ENCODE measurements at regions of chr17 and their contacts with region 1.

Region 1: DNA sequence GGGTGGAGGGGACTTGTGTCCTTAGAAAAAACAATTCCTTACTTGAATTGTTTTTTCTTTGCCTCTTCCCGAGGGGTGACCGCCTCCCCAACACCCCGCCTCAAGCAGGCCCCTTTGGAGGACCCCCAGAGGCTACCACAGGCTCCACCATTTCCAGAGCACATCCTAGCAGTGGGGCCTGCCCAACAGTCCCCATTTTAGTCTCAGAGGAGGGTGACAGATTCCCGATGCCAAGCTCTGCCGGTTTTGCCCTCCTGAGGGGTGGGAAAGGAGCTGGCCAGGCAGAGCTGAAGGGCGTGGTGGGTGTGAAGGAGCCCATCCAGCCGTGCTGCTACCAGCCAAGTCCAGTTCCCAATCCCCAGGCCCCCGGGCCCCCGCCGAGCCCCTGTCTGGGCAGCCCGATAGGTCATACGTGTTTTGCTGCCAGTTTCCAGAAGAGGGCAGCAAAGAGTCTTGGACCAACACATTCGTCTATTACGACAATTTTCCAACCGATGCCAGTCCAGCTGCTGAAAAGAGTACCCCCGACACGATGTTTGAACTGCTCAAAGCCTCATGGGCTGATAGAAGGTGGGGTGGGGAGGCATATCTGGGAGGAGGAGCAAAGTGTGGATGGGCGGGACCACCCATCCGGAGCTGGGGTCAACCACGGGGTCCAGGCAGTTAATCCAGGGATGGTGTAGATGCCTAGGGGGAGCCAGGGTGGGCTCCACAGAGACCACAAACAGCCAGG is 18.8 kb upstream of the GAA start:
- H3K4me3 ChIP-seq: no peak overlapping the region
- H3K27ac ChIP-seq: no peak overlapping the region
- H3K4me1 ChIP-seq: no peaks in the 10 kb centered on the region
- CTCF ChIP-seq: peak; percentile 52; the same call in 1 of the 2 replicates

Region 2: DNA sequence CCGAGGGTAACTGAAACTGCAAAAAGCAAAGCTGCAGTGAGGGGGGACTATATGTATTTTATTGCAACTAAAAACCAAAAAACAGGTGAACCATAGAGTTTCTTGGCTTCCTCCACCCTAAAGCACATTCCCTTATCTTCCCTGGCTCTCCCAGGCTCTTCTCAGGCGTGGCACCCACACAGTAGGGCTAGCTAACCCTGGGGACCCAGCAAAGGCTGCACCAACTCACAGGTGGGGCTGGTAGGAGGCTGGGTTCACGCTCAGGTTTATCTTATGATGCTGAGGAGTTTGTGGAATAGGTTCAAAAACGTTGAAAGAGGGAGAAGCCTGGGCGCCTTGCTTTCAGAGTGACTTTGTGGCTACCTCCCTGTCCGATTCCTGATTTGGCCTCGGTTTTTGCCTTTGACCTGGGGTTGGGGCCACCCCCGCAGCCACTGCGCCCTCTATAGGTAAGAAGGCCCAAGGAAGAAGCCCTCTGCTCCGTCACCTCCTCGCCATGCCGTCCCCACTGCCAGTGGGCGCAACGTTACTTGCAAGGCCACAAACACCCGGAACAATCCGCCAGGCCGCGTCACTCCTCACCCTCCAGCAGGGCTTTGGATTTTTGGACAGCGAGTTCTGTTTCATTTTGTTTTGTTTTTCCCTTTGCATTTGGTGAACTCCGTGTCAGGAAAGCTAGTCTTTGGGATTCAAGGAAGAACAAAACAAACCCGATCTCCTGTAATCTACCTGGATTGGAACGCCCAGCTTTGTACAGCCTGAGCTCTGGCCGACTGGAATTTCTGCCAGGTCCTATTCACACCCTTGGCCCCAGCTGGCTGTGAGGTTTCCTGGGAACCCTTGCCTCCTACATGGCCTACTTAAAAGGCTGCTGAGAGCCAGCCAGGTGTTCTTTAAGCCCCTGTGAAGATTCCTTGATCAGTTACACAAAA is 107.7 kb before region 1 on chr17:
- CTCF ChIA-PET with region 1: no interaction called
- POLR2A ChIA-PET with region 1: no interaction called
- H3K4me3 ChIP-seq: no peak overlapping the region
- H3K27ac ChIP-seq: no peak overlapping the region; the same call in 1 of the 2 replicates
- H3K4me1 ChIP-seq: no peaks in the 10 kb centered on the region
- CTCF ChIP-seq: no peak

Region 3: DNA sequence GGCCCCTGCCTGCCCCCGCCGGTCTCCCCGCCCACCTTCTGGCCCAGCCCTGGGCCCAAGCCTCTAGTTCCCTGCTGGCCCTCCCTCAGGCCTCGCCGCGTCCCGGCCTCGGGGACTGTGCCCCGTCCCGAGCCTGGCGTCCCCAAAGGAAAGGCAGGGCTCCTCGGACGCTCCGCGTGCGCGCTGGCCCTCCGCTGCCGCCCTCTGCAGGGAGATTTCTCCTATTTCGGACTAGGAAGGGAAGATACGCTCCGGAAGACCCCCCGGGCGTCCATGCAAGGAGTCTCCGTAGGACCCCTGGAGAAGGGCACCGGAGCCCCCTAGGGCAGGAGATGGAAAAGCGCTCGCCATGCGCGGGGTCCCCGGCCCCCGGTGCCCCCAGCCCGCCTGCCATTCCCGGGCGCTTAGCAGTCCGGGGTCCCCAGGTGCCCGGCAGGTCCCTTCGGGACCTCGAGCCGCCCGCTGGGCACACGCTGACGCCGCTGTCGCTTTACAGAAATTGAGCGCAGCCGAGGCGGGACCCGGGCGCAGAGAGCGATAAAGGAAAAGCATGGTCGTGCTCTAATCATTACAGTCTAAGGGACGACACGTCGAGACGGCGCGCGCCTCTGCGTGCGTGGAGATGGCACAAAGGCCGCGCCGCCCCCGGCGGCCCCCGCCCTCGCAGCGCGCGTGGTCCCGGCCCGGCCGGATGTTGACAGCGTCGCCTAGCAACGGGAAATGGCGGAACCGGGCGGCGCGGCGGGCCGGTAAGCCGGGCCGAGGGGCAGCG is 46.4 kb before region 1 on chr17 and contains the start of gene CCDC40:
- CTCF ChIA-PET with region 1: interaction called, 12 read pairs
- POLR2A ChIA-PET with region 1: no interaction called
- H3K4me3 ChIP-seq: peak within 1 kb of the TSS; percentile 70
- H3K27ac ChIP-seq: peak within 1 kb of the TSS; percentile 72; the same call in 1 of the 2 replicates
- H3K4me1 ChIP-seq: no peaks in the 10 kb centered on the region
- CTCF ChIP-seq: peak; percentile 45; the same call in 1 of the 2 replicates

Region 4: GRCh38 chr17:80058311-80058955 is 24.1 kb before region 1 on chr17:
- CTCF ChIA-PET with region 1: interaction called, 10 read pairs
- POLR2A ChIA-PET with region 1: no interaction called
- H3K4me3 ChIP-seq: no peak overlapping the region
- H3K27ac ChIP-seq: no peak overlapping the region
- H3K4me1 ChIP-seq: 0 out of 2 replicates have a peak, but pooled peaks cover 2% of the 10 kb centered on the region
- CTCF ChIP-seq: no peak

Region 5: GRCh38 chr17:80072410-80072809 is 10.2 kb before region 1 on chr17:
- CTCF ChIA-PET with region 1: no interaction called
- POLR2A ChIA-PET with region 1: no interaction called
- H3K4me3 ChIP-seq: no peak overlapping the region
- H3K27ac ChIP-seq: no peak overlapping the region
- H3K4me1 ChIP-seq: no peaks in the 10 kb centered on the region; the same call in 1 of the 2 replicates
- CTCF ChIP-seq: no peak

Region 6: GRCh38 chr17:80092959-80093358 is 10.4 kb after region 1 on chr17:
- CTCF ChIA-PET with region 1: interaction called, 24 read pairs
- POLR2A ChIA-PET with region 1: no interaction called
- H3K4me3 ChIP-seq: no peak overlapping the region
- H3K27ac ChIP-seq: no peak overlapping the region
- H3K4me1 ChIP-seq: 0 out of 2 replicates have a peak, but pooled peaks cover 2% of the 10 kb centered on the region
- CTCF ChIP-seq: no peak

Region 7: GRCh38 chr17:80212109-80212508 is 129.5 kb after region 1 on chr17:
- CTCF ChIA-PET with region 1: no interaction called
- POLR2A ChIA-PET with region 1: no interaction called
- H3K4me3 ChIP-seq: no peak overlapping the region
- H3K27ac ChIP-seq: no peak overlapping the region
- H3K4me1 ChIP-seq: no peaks in the 10 kb centered on the region
- CTCF ChIP-seq: no peak

Region 8: DNA sequence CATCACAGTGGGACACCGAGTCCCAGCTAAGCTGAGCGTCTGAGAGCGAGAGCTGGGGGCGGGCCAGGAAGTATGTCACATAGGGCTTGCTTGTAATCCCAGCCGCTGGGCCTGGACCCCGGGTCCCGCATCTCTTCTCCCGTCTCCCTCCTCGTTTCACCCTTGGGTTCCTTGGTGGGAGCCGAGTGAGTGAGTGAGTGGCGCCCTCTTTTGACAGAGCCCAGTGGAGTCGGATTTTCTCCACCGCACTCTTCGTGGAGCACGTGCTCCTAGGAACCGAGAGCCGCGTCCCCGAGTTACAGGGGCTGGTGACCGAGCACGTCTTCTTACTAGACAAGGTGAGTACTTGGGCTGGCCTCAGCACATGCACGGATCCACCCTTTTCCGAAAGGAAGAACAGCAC is 281.6 kb after region 1 on chr17:
- CTCF ChIA-PET with region 1: interaction called, 15 read pairs
- POLR2A ChIA-PET with region 1: no interaction called
- H3K4me3 ChIP-seq: no peak overlapping the region
- H3K27ac ChIP-seq: no peak overlapping the region
- H3K4me1 ChIP-seq: no peaks in the 10 kb centered on the region
- CTCF ChIP-seq: no peak

Measured in HEK293 (cell line).